SK-N-SH (cell line): ENCODE measurements at regions of chr20 and their contacts with region 1.

Region 1: DNA sequence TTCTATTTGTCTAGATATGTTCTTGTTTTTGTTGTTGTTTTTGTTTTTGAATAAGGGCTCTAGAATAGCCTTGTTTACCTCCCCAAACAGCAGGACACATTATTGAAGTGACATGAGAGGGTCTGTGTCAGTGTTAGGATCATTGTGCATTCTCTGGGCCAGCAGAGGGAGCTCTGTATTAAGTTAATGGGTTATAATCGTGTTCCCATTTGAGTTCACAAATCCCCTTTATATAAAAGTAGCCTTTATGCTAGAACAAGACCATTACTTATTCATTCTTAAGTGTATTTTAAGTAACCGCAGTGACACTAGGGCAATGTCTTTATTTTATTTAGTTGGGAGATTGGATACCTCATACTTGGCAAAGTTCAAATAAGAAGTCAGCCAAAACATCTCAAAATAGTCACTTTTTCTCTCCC is 44.8 kb downstream of the STK4 start:
- DNase-seq: peak; percentile 57
- H3K4me3 ChIP-seq: peak overlapping the region in 1 of 2 experiments; percentile 33; a peak in 1 of 4 replicates
- H3K27ac ChIP-seq: peak overlapping the region; percentile 51 to 96; a peak in 3 of 4 replicates
- H3K4me1 ChIP-seq: peaks cover 15 to 31% of the 10 kb centered on the region in 2 experiments
- H3K27me3 ChIP-seq: no peaks in the 10 kb centered on the region
- CTCF ChIP-seq: peak; percentile 96
- EP300 ChIP-seq: no peak
- RAD21 ChIP-seq: peak; percentile 82

Region 2: GRCh38 chr20:44997171-44998067 is 13.7 kb before region 1 on chr20:
- CTCF ChIA-PET with region 1: interaction called, 13 read pairs
- POLR2A ChIA-PET with region 1: no interaction called
- DNase-seq: no peak
- H3K4me3 ChIP-seq: no peak overlapping the region
- H3K27ac ChIP-seq: no peak overlapping the region
- H3K4me1 ChIP-seq: peaks cover 0 to 7% of the 10 kb centered on the region in 2 experiments; a peak in 2 of 4 replicates
- H3K27me3 ChIP-seq: no peaks in the 10 kb centered on the region
- CTCF ChIP-seq: no peak
- EP300 ChIP-seq: no peak
- RAD21 ChIP-seq: no peak

Region 3: DNA sequence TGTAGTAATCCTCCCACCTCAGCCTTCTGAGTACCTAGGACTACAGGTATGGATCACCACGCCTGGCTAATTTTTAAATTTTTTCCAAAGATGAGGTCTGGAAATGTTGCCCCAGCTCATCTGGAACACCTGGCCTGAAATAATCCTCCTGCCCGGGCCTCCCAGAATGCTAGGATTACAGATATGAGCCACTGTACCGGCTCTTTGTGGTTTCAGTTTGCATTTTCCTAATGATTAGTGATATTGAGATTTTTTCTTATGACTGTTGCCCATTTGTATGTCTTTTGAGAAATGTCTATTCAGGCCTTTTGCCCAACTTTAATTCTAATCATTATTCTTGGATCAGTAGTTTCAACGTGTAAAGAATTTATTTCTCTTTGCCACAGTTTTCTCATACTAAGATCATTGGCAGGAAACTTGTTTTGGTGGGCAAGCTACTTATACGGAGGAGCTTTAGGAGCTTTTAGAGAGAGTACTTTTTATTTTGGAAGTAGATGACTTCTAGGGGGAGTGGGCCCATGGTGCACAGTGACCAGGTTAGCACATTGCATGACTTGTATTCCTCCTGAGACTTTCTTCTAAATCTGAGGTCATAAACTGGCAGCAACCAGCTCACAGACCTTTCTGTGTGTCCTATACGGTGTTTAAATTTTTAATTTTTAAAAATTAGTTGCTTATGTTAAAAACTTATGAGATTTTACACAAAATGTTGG is 17.5 kb after region 1 on chr20:
- CTCF ChIA-PET with region 1: interaction called, 14 read pairs
- POLR2A ChIA-PET with region 1: interaction called, 4 read pairs
- DNase-seq: no peak
- H3K4me3 ChIP-seq: no peak overlapping the region
- H3K27ac ChIP-seq: no peak overlapping the region
- H3K4me1 ChIP-seq: no peaks in the 10 kb centered on the region
- H3K27me3 ChIP-seq: no peaks in the 10 kb centered on the region
- CTCF ChIP-seq: no peak
- EP300 ChIP-seq: no peak
- RAD21 ChIP-seq: no peak